Transverse colon (tissue), 4 donors: ENCODE measurements at regions of chr15 and their contacts with region 1.

Region 1: GRCh38 chr15:73755481-73755880 is 2.3 kb upstream of the INSYN1 start:
- DNase-seq: no peak
- H3K4me3 ChIP-seq: no peak overlapping the region
- H3K27ac ChIP-seq: no peak overlapping the region
- H3K4me1 ChIP-seq: peaks cover 0 to 17% (median 11%) of the 10 kb centered on the region in 4 donors
- H3K27me3 ChIP-seq: peaks cover 65% of the 10 kb centered on the region
- CTCF ChIP-seq: no peak
- EP300 ChIP-seq: no peak
- POLR2A ChIP-seq: no peak

Region 2: GRCh38 chr15:72482275-72482674 is 1273.2 kb before region 1 on chr15:
- in situ Hi-C with region 1: no loop called
- intact Hi-C with region 1: loop called (anchors 5 kb)
- DNase-seq: no peak
- H3K4me3 ChIP-seq: no peak overlapping the region
- H3K27ac ChIP-seq: no peak overlapping the region
- H3K4me1 ChIP-seq: peaks cover 13 to 68% (median 17%) of the 10 kb centered on the region in 4 donors
- H3K27me3 ChIP-seq: no peaks in the 10 kb centered on the region
- CTCF ChIP-seq: no peak
- EP300 ChIP-seq: no peak
- POLR2A ChIP-seq: no peak

Region 3: DNA sequence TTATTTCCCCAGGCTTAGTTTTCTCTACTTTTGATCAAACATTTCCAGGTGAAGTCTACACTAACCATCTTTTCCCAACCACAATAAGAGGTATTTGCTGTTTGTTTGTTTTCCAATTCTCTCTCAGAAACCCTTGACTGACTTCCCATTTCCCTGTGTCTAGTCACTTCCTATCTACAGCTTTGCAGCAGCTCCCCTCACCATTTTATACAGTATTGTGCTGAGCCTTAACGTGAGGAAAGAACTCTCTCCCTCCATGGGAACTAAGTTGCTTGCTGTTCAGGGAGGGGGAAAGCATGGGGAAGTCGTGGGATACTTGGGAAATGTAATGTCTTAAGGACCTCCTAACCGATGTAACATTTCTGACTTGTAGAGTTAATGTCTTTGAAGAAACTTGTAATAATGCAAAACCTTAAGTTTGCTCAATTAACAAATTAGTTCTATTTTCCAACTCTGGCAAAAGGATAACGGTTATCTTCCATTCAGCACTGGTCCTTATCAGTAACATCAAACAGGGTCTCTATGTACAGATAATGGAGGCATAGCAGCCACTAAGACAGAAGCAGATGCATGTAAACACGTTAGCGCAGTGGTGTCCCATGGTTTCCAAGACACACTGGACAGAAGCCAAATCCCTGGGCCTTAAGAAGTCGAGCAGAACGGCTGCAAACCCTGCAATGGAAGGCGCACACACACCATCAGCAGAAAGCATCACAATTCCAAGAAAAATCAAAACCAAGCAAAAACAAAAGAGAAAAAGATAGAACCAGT is 162.0 kb before region 1 on chr15:
- in situ Hi-C with region 1: no loop called
- intact Hi-C with region 1: no loop called
- DNase-seq: no peak
- H3K4me3 ChIP-seq: no peak overlapping the region
- H3K27ac ChIP-seq: peak overlapping the region in 1 of 4 donors; percentile 3
- H3K4me1 ChIP-seq: peaks cover 10 to 53% (median 23%) of the 10 kb centered on the region in 4 donors
- H3K27me3 ChIP-seq: no peaks in the 10 kb centered on the region
- CTCF ChIP-seq: no peak
- EP300 ChIP-seq: no peak
- POLR2A ChIP-seq: no peak

Region 4: DNA sequence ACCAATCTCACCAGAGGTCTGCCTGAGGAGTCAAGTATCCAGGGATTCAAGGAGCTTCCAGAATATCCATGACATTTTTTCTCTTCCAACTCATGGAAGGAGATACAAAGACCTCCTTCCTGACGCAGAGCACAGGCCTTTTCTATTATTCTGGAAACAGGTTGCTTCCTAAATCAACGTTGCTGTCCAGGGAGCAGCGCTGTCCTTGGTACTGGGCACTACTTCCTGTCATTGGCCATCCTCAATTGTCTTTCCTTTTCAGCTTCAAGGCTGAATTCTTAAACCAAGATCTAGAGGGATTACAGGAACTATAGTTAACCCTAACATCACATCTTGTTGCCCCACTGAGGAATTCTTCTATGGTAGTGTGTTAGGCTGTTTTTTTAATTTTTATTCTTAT is 67.5 kb after region 1 on chr15:
- in situ Hi-C with region 1: no loop called
- intact Hi-C with region 1: no loop called
- DNase-seq: no peak
- H3K4me3 ChIP-seq: no peak overlapping the region
- H3K27ac ChIP-seq: no peak overlapping the region
- H3K4me1 ChIP-seq: no peaks in the 10 kb centered on the region
- H3K27me3 ChIP-seq: no peaks in the 10 kb centered on the region
- CTCF ChIP-seq: no peak
- EP300 ChIP-seq: no peak
- POLR2A ChIP-seq: no peak